OCI-LY7 (cell line): ENCODE measurements at regions of chr5 and their contacts with region 1.

Region 1: GRCh38 chr5:5421961-5422818 is at the start of gene ICE1:
- DNase-seq: peak; percentile 97
- H3K4me3 ChIP-seq: peak within 1 kb of the TSS; percentile 99
- H3K27ac ChIP-seq: peak within 1 kb of the TSS; percentile 71
- H3K4me1 ChIP-seq: peaks cover 45% of the 10 kb centered on the region
- CTCF ChIP-seq: no peak
- total RNA-seq, gene ICE1: 24.4 and 25.2 TPM in 2 replicates

Region 2: GRCh38 chr5:4868109-4868735 is 554.0 kb before region 1 on chr5:
- CTCF ChIA-PET with region 1: no interaction called
- POLR2A ChIA-PET with region 1: no interaction called
- intact Hi-C with region 1: loop called (anchors 5 kb)
- DNase-seq: peak; percentile 47
- H3K4me3 ChIP-seq: no peak overlapping the region
- H3K27ac ChIP-seq: no peak overlapping the region
- H3K4me1 ChIP-seq: no peaks in the 10 kb centered on the region
- CTCF ChIP-seq: peak; percentile 94

Region 3: GRCh38 chr5:5141625-5142532 is 280.3 kb before region 1 on chr5:
- CTCF ChIA-PET with region 1: interaction called, 3 read pairs
- POLR2A ChIA-PET with region 1: no interaction called
- intact Hi-C with region 1: loop called (anchors 1 kb)
- DNase-seq: peak; percentile 68
- H3K4me3 ChIP-seq: no peak overlapping the region
- H3K27ac ChIP-seq: no peak overlapping the region
- H3K4me1 ChIP-seq: no peaks in the 10 kb centered on the region
- CTCF ChIP-seq: peak; percentile 93

Region 4: DNA sequence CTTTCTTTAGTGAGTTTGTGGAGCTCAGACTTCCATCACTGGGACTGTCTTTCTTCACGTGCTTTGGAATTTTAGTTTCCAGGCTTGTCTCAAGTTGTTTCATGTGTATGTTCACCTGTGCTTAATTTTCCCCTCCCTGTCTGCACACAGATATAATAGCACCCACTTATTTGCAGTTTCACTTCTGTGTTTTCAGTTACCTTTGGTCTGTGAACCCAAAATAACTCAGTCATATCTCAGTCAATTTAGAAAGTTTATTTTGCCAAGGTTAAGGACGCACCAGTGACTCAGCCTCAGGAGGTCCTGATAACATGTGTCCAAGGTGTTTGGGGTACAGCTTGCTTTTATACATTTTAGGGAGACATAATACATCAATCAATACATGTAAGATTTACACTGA is 330.7 kb after region 1 on chr5:
- CTCF ChIA-PET with region 1: interaction called, 3 read pairs
- POLR2A ChIA-PET with region 1: no interaction called
- intact Hi-C with region 1: loop called (anchors 5 kb)
- DNase-seq: peak; percentile 68
- H3K4me3 ChIP-seq: peak overlapping the region; percentile 39
- H3K27ac ChIP-seq: peak overlapping the region; percentile 75
- H3K4me1 ChIP-seq: peaks cover 79% of the 10 kb centered on the region
- CTCF ChIP-seq: no peak

Region 5: GRCh38 chr5:6377905-6378765 is 955.9 kb after region 1 on chr5 and contains the start of gene MED10:
- CTCF ChIA-PET with region 1: no interaction called
- POLR2A ChIA-PET with region 1: no interaction called
- intact Hi-C with region 1: loop called (anchors 2 kb)
- DNase-seq: peak; percentile 95
- H3K4me3 ChIP-seq: peak within 1 kb of the TSS; percentile 88
- H3K27ac ChIP-seq: peak within 1 kb of the TSS; percentile 39
- H3K4me1 ChIP-seq: peaks cover 18% of the 10 kb centered on the region
- CTCF ChIP-seq: no peak
- total RNA-seq, gene MED10: 7.9 and 16.2 TPM in 2 replicates

Region 6: GRCh38 chr5:6722015-6722414 is 1299.8 kb after region 1 on chr5:
- CTCF ChIA-PET with region 1: no interaction called
- POLR2A ChIA-PET with region 1: no interaction called
- intact Hi-C with region 1: loop called (anchors 5 kb)
- DNase-seq: peak; percentile 52
- H3K4me3 ChIP-seq: peak overlapping the region; percentile 51
- H3K27ac ChIP-seq: peak overlapping the region; percentile 34
- H3K4me1 ChIP-seq: peaks cover 78% of the 10 kb centered on the region
- CTCF ChIP-seq: no peak